GM10248 (cell line): ENCODE measurements at regions of chr18 and their contacts with region 1.

Region 1: DNA sequence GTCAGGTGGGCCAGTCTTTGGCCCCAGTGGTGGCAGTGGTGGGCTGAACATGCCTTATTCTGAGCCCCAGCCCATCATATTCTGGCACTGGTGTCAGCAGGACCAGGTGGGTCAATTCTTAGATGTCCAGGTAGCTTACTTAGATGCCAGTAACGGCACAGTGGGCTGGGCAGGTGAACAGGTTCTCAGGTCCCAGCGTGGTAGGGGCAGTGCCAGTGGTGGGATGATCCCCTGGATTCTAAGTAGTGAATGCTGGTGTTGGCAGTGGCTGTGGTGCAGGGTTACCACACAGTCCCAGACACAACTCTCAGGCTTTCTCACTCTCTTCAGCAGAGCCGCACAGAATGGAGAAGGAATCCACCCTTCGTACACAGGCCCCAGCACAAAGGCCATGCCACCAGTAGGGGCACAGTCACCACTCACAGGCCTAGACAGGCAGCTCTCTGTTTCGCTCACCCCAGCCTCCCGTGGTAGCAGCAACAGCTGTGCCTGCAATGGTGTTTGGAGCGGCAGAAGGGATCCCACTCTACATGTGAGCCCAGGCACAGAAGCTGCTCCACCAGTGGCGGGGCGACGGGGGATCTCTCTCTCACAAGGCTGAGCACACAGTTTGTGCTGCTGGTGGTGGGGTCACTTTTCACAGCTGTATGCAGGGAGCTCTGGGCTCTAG is 97.3 kb downstream of the ANKRD12 start:
- DNase-seq: no peak
- CTCF ChIP-seq: no peak

Region 2: DNA sequence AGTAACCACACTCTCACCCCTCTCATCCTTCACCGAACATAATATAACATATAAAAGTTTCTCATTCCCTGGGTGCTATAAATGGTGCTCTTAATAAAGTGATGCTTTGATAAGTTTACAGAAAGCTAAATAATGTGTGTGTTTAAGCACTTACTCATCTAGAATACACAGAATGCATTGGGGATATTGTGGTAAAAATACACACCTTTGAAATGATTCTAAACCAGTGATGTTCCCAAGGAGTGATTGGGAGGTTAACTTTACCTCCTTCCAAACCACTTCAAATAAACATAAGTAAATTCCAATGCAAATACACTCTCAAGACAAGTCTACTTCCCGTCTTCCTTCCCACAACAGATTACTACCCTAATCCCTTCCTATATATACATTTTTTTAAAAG is 15.3 kb after region 1 on chr18:
- CTCF ChIA-PET with region 1: interaction called, 12 read pairs
- POLR2A ChIA-PET with region 1: interaction called, 3 read pairs
- DNase-seq: no peak
- CTCF ChIP-seq: no peak